ENCODE measurements at regions of chr4 and their contacts with region 1.

Region 1: DNA sequence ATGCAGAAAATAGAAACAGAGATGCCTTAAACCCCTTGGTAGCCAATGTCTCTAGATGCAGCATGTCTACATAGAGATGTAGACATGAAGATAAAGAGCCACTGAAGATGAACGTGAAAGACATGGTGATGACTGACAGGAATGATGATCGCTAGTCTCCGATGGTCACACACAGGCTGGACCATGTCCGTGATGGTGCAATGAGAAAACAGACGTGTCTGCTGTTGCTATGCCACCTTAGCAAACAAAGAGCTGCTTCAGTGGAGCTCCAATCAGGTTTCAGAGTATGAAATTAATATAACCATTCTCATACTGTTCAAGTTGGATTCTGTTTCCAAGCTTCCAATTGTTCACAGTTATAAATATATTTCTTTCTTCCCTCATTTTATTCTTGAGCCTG is 256.5 kb downstream of the CAMK2D start:
- DNase-seq: no peak
- H3K4me3 Mint-ChIP-seq: no peak overlapping the region
- H3K27ac Mint-ChIP-seq: no peak overlapping the region
- H3K4me1 Mint-ChIP-seq: peaks cover 14% of the 10 kb centered on the region
- H3K27me3 Mint-ChIP-seq: no peaks in the 10 kb centered on the region

Region 2: DNA sequence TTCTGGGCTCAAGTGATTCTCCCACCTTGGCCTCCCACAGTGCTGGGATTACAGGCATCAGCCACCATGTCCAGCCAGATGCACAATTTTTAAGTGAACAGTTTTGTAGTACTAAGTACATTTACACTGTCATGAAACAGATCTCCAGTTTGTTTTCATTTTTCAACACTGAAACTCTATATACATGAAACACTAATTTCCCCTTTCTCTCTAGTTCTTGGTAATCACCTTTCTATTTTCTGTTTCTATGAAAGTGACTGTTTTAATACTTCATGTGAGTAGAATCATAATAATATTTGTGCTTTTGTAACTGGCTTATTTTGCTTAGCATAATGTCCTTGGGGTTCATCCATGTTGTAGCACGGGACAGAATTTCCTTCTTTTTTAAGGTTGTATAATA is 19.1 kb after region 1 on chr4:
- intact Hi-C with region 1: loop called (anchors 2 kb)
- DNase-seq: no peak
- H3K4me3 Mint-ChIP-seq: peak overlapping the region; percentile 3
- H3K27ac Mint-ChIP-seq: peak overlapping the region; percentile 31
- H3K4me1 Mint-ChIP-seq: peaks cover 15% of the 10 kb centered on the region
- H3K27me3 Mint-ChIP-seq: no peaks in the 10 kb centered on the region